Head of caudate nucleus (tissue), 42 donors: ENCODE measurements at regions of chr12 and their contacts with region 1.

Region 1: GRCh38 chr12:26853303-26854030 is 20.5 kb upstream of the ITPR2 start:
- DNase-seq: peak; percentile 57 to 90 (median 76)

Region 2: DNA sequence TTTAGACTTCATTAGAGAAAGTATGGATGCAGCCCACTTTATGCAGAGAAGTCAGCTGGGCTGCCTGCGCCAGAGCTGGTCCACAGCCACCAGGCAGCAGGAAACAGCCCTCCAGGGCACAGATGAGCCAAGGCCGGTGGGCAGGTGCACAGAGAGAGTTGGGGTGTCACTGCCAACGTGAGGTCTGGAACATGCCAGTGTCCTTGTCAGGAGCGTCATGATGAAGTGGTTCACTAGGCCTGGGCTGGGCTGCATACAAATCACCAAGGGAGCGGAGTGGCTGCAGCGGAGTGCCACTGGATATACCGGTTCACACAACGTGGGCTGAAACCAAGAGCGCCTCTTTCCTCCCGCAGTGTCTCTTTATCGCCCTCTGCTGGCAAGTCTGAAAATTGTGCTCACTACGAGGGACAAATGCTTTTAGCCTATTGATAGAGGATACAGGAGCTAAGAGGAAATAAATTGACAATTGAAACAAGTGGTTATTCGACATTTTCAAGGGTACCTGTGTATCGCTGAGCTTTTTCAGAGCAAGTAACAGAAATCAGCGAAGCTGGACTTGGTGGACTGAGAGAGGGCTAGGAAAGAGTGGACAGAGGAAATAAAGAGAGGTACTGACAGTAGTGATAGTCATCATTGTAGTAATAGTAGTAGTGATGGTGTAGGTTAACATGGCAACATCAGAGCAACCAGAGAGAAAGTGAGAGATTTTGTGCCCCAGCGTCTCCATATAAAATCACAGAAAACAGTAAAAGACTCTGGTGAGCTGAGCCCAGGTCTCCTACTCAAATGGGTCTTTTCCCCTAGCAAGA is 31.5 kb after region 1 on chr12:
- intact Hi-C with region 1: loop called (anchors 5 kb)
- DNase-seq: peak; percentile 59 to 94 (median 87)

Region 3: DNA sequence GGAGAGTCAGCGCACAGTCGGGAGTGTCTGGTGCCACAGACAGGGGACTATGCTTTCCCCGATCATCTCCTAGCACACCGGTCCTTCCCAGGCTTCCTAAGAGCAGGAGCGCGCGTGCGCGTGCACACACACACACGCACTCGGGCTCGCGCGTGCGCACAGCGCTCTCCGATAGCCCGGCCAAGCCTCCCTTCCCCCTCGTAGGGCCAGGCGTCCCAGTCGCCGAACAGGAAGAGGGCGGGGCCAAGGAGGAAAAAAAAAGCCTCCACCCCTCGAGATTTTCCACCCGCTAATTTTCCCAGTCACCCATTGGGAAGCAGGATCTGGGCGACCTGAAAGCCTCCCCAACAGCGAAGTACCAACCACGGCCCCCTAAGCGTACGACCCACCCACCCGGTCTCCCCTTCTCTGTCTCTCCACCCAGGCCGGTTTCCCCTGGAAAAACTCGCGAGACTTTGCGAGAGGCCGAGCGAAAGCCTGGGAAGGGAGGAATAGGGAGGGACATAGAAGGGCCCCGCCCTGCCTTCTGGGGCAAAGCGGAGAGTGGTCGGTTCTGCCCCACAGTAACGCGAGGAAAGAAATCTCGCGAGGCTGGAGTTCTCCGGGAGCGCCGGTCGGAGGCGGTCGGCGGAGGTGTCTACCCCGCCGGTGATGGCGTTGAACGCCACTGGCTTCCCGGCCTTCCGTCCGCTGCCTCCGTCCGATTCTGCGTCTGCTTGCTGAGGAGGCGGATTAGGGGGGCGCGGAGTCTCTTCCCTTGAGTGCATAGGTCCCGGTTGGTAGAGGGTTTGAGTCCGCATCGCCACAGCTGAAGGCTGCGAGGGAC is 84.6 kb after region 1 on chr12 and contains the starts of genes FGFR1OP2 and INTS13:
- intact Hi-C with region 1: loop called (anchors 10 kb)
- DNase-seq: peak; percentile 94 to 99 (median 97)